T-cell (primary cell): ENCODE measurements at regions of chr17 and their contacts with region 1.

Region 1: GRCh38 chr17:40615295-40615988 is 32.2 kb downstream of the SMARCE1 start:
- DNase-seq: peak in 25 of 35 experiments; percentile 32 to 82 (median 58)
- ATAC-seq: peak; percentile 44 to 69 (median 46)
- H3K4me3 ChIP-seq: no peak overlapping the region
- H3K4me3 Mint-ChIP-seq: peak overlapping the region; percentile 61 to 94 (median 64)
- H3K27ac ChIP-seq: peak overlapping the region; percentile 99
- H3K27ac Mint-ChIP-seq: peak overlapping the region; percentile 87 to 100
- H3K4me1 ChIP-seq: peaks cover 40 to 76% of the 10 kb centered on the region in 2 experiments
- H3K4me1 Mint-ChIP-seq: peaks cover 71 to 86% (median 72%) of the 10 kb centered on the region in 3 donors
- H3K27me3 ChIP-seq: no peaks in the 10 kb centered on the region
- H3K27me3 Mint-ChIP-seq: no peaks in the 10 kb centered on the region

Region 2: GRCh38 chr17:40281663-40282062 is 333.8 kb before region 1 on chr17:
- CTCF ChIA-PET with region 1: no interaction called
- POLR2A ChIA-PET with region 1: interaction called in 1 of 2 experiments, 11 read pairs
- DNase-seq: peak in 1 of 35 experiments; percentile 17
- ATAC-seq: no peak
- H3K4me3 ChIP-seq: no peak overlapping the region
- H3K4me3 Mint-ChIP-seq: no peak overlapping the region
- H3K27ac ChIP-seq: no peak overlapping the region
- H3K27ac Mint-ChIP-seq: peak overlapping the region; percentile 62
- H3K4me1 ChIP-seq: peaks cover 0 to 8% of the 10 kb centered on the region in 2 experiments
- H3K4me1 Mint-ChIP-seq: peaks cover 9 to 32% (median 17%) of the 10 kb centered on the region in 3 donors
- H3K27me3 ChIP-seq: no peaks in the 10 kb centered on the region
- H3K27me3 Mint-ChIP-seq: no peaks in the 10 kb centered on the region

Region 3: GRCh38 chr17:40602775-40603551 is 12.5 kb before region 1 on chr17:
- CTCF ChIA-PET with region 1: interaction called, 4 to 6 read pairs
- POLR2A ChIA-PET with region 1: interaction called, 4 to 14 read pairs
- DNase-seq: peak; percentile 42 to 90 (median 71)
- ATAC-seq: peak; percentile 54 to 65 (median 62)
- H3K4me3 ChIP-seq: peak overlapping the region in 1 of 2 donors; percentile 41
- H3K4me3 Mint-ChIP-seq: peak overlapping the region; percentile 72 to 77 (median 73)
- H3K27ac ChIP-seq: peak overlapping the region; percentile 99
- H3K27ac Mint-ChIP-seq: peak overlapping the region; percentile 99 to 100
- H3K4me1 ChIP-seq: peaks cover 84 to 94% of the 10 kb centered on the region in 2 experiments
- H3K4me1 Mint-ChIP-seq: peaks cover 94 to 99% (median 99%) of the 10 kb centered on the region in 3 donors
- H3K27me3 ChIP-seq: no peaks in the 10 kb centered on the region
- H3K27me3 Mint-ChIP-seq: no peaks in the 10 kb centered on the region